Aorta (tissue), 5 donors: ENCODE measurements at regions of chr21 and their contacts with region 1.

Region 1: DNA sequence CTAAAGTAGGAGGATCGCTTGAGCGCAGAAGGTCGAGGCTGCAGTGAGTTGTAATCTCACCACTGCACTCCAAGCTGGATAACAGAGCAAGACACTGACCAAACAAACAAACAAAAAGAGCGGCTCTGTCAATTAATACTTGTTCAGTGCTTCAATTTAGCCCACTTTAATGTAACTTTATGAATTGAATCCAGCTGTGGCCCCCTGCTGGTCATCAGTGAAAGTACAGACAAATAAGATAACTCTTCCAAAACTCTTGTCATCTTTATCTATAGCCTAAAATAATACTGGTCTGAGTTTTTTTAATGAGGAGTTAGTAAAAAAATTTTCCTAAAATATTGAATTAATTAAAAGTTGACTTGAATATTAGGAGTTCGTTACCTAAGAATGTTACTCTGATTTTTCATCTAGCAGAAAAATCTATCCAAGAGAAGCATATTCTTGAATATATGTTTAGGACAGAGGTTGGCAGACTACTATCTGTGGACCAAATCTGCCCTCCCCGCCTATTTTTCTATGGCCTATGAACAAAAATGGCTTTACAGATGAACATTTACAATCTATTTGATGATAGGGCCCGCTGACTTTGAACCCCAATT is 26.1 kb downstream of the ATP5PF start:
- DNase-seq: no peak
- ATAC-seq: no peak
- H3K4me3 ChIP-seq: no peak overlapping the region
- H3K27ac ChIP-seq: no peak overlapping the region
- H3K4me1 ChIP-seq: no peaks in the 10 kb centered on the region
- H3K27me3 ChIP-seq: no peaks in the 10 kb centered on the region

Region 2: GRCh38 chr21:25607151-25608043 is 101.2 kb before region 1 on chr21 and contains the start of gene MRPL39:
- intact Hi-C with region 1: loop called (anchors 2 kb)
- DNase-seq: peak; percentile 92 to 95
- ATAC-seq: peak; percentile 98
- H3K4me3 ChIP-seq: peak within 1 kb of the TSS; percentile 88 to 90
- H3K27ac ChIP-seq: peak within 1 kb of the TSS in 1 of 2 donors; percentile 38
- H3K4me1 ChIP-seq: peaks cover 0 to 4% of the 10 kb centered on the region in 2 donors
- H3K27me3 ChIP-seq: no peaks in the 10 kb centered on the region
- total RNA-seq, gene MRPL39: 15.8 to 16.8 TPM

Region 3: GRCh38 chr21:25626757-25627156 is 81.8 kb before region 1 on chr21:
- intact Hi-C with region 1: no loop called
- DNase-seq: no peak
- ATAC-seq: no peak
- H3K4me3 ChIP-seq: no peak overlapping the region
- H3K27ac ChIP-seq: no peak overlapping the region
- H3K4me1 ChIP-seq: no peaks in the 10 kb centered on the region
- H3K27me3 ChIP-seq: no peaks in the 10 kb centered on the region

Region 4: DNA sequence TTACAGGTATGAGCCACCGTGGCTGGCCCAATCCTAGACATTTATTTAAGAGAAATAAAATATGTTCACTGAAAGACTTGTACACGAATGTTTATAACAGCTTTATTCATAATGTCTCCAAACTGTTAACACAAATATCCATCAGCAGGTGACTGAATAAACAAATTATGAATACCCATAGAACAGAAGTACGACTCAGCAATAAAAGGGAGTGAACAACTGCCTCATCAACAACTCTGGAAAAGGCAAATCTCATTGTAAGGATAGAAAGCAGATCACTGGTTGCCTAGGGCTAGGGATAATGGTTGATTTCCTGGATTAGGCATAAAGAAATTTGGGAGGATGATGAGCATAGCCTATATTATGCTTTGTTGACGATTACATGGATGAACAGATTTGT is 67.9 kb after region 1 on chr21:
- intact Hi-C with region 1: no loop called
- DNase-seq: no peak
- ATAC-seq: no peak
- H3K4me3 ChIP-seq: no peak overlapping the region
- H3K27ac ChIP-seq: no peak overlapping the region
- H3K4me1 ChIP-seq: no peaks in the 10 kb centered on the region
- H3K27me3 ChIP-seq: no peaks in the 10 kb centered on the region